ENCODE measurements at regions of chr6 and their contacts with region 1.

Region 1: DNA sequence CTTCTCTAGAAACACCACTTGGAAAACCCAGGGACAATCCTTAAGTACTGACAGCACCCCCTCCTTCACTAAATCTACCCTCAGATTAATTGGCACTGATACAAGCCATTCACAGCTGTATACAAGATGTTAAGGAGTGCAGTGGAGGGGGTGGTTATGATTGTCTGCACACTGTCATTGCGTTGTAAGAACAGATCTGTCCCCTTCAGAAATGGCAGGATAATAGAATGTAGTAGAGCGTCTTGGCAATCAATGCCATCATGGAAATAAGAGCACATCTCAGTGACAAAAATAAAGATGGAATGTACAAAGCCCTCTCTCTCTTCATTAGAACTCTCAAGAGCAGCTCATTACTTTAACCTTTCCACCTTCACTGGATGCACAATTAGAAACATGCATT is 324.9 kb upstream of the TBX18 start:
- DNase-seq: no peak
- H3K4me3 ChIP-seq: no peak overlapping the region
- H3K27ac ChIP-seq: no peak overlapping the region
- H3K4me1 ChIP-seq: no peaks in the 10 kb centered on the region
- H3K27me3 ChIP-seq: no peaks in the 10 kb centered on the region
- CTCF ChIP-seq: no peak
- POLR2A ChIP-seq: no peak

Region 2: DNA sequence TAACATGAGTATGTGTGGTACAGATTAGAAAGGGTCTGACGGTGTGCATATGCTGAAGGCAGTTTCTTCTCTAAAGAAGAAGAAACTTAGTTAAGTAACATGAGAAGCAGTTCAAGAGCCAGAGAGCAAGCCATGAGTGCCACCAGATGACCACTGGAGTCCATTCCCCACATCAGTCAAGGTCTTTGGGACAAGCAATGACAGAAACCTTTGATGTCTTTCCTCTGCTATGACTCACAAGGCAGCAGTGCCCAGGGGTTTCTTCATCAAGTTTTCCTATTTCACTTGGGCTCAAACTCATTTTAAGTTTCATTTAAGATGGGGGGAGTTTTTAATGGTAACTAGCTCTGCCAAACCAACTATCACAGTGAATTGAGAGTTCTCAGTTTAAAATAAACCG is 21.0 kb before region 1 on chr6:
- intact Hi-C with region 1: loop called (anchors 1 kb)
- DNase-seq: no peak
- H3K4me3 ChIP-seq: no peak overlapping the region
- H3K27ac ChIP-seq: no peak overlapping the region
- H3K4me1 ChIP-seq: no peaks in the 10 kb centered on the region
- H3K27me3 ChIP-seq: no peaks in the 10 kb centered on the region
- CTCF ChIP-seq: no peak
- POLR2A ChIP-seq: no peak